Caco-2 (cell line): ENCODE measurements at regions of chr10 and their contacts with region 1.

Region 1: DNA sequence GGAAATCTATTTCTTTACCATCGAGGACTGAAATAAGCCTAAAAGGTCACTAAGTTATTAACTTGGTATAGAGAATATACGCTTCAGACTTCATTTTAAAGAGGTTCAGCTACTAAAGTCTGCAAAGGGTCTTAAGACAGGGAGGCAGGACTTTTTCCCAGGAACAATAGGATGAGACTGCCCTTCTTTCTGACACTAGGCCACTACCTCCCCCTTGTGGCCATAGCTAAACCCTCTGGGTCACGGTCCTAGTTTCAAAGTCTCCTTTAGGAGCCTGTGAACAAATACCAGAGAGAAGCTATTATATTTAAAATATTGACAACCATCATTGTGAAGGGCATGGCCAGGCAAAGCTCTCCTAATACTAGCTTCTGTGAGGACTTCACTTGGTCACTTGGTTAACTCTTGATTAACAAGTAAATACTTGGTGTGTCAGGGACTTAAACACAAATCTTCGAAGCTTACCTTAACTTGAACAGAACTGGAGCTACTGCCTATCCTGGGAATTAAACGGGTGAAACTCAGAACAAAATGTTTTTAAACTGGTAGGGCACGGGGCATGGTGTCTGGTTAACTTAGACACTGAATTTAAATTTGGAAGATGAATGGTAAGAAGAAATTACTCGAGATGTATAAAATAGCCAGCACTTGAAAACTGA is 75.6 kb downstream of the CCDC6 start:
- DNase-seq: peak; percentile 68 to 79
- H3K4me3 ChIP-seq: no peak overlapping the region
- H3K4me3 Mint-ChIP-seq: no peak overlapping the region
- H3K27ac Mint-ChIP-seq: no peak overlapping the region
- H3K4me1 ChIP-seq: no peaks in the 10 kb centered on the region; the same call in 1 of the 2 replicates
- H3K4me1 Mint-ChIP-seq: peaks cover 7% of the 10 kb centered on the region
- H3K27me3 ChIP-seq: no peaks in the 10 kb centered on the region
- H3K27me3 Mint-ChIP-seq: no peaks in the 10 kb centered on the region
- CTCF ChIP-seq: peak; percentile 91 to 98

Region 2: DNA sequence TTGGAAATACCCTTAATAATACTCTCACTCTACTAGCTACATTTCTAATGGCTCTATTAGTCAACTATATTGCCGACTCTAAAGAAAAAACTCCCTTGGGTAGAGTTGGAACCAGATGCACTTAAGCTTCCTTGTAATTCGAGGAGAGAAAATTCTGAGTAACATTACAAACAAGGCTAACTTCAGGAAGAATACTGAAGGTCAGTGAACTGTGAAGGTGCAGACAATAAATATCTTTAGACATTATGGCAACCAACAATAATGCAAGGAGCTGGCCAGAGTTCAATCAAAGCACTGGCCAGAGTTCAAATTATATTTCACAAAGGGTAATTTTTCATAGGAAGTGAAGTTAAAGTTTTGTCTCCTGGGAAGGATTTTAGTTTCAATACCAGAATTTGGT is 36.8 kb before region 1 on chr10:
- CTCF ChIA-PET with region 1: no interaction called
- POLR2A ChIA-PET with region 1: no interaction called
- intact Hi-C with region 1: no loop called
- DNase-seq: no peak
- H3K4me3 ChIP-seq: no peak overlapping the region
- H3K4me3 Mint-ChIP-seq: no peak overlapping the region
- H3K27ac Mint-ChIP-seq: no peak overlapping the region
- H3K4me1 ChIP-seq: no peaks in the 10 kb centered on the region
- H3K4me1 Mint-ChIP-seq: no peaks in the 10 kb centered on the region
- H3K27me3 ChIP-seq: no peaks in the 10 kb centered on the region
- H3K27me3 Mint-ChIP-seq: no peaks in the 10 kb centered on the region
- CTCF ChIP-seq: no peak

Region 3: GRCh38 chr10:59817773-59818172 is 13.0 kb before region 1 on chr10:
- CTCF ChIA-PET with region 1: interaction called, 11 read pairs
- POLR2A ChIA-PET with region 1: no interaction called
- intact Hi-C with region 1: no loop called
- DNase-seq: no peak
- H3K4me3 ChIP-seq: no peak overlapping the region
- H3K4me3 Mint-ChIP-seq: no peak overlapping the region
- H3K27ac Mint-ChIP-seq: no peak overlapping the region
- H3K4me1 ChIP-seq: no peaks in the 10 kb centered on the region
- H3K4me1 Mint-ChIP-seq: no peaks in the 10 kb centered on the region
- H3K27me3 ChIP-seq: no peaks in the 10 kb centered on the region
- H3K27me3 Mint-ChIP-seq: no peaks in the 10 kb centered on the region
- CTCF ChIP-seq: no peak

Region 4: DNA sequence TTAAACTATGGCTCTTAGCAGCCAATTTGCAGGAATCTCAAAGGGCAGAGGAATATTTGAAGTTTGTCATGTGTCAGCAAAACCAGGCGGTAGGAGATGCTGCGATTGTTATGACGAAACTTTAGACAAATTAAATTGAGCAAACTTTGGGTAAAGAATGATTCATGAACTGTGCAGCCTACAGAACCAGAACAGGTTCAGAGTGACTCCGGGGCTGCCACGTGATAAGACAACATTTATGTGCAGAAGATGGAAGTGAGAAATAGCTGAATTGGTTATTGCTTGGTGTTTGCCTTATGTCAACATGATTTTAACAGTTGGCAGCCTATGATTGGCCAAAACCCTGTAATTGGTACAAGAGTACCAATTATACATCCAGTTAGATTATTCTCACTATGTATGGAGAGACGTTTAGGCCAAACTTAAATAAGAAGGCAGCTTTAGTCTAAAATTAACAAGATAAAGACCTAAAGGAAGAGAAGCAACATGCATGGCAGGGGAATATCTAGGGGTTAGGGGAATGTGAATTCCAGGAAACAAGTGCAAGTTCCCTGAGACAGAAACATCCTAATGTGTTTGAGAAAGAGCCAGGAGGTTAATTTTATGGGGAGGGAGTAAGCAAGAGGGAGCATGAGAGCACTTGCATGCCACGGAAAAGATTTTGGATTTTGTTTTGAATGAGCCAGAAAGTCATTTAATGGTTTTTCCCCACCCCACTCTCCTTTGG is 115.1 kb after region 1 on chr10:
- CTCF ChIA-PET with region 1: no interaction called
- POLR2A ChIA-PET with region 1: no interaction called
- intact Hi-C with region 1: no loop called
- DNase-seq: no peak
- H3K4me3 ChIP-seq: no peak overlapping the region
- H3K4me3 Mint-ChIP-seq: no peak overlapping the region
- H3K27ac Mint-ChIP-seq: no peak overlapping the region
- H3K4me1 ChIP-seq: peaks cover 13% of the 10 kb centered on the region
- H3K4me1 Mint-ChIP-seq: peaks cover 21% of the 10 kb centered on the region
- H3K27me3 ChIP-seq: no peaks in the 10 kb centered on the region
- H3K27me3 Mint-ChIP-seq: no peaks in the 10 kb centered on the region
- CTCF ChIP-seq: no peak